ENCODE measurements at regions of chr10 and their contacts with region 1.

Region 1: GRCh38 chr10:109883859-109884771 is 39.2 kb downstream of the XPNPEP1 start:
- DNase-seq: peak; percentile 41 to 82 (median 52)
- ATAC-seq: peak; percentile 88
- H3K4me3 ChIP-seq: no peak overlapping the region
- H3K4me3 Mint-ChIP-seq: no peak overlapping the region
- H3K27ac ChIP-seq: no peak overlapping the region
- H3K27ac Mint-ChIP-seq: no peak overlapping the region
- H3K4me1 ChIP-seq: peaks cover 5% of the 10 kb centered on the region
- H3K4me1 Mint-ChIP-seq: peaks cover 6% of the 10 kb centered on the region
- H3K27me3 ChIP-seq: no peaks in the 10 kb centered on the region
- H3K27me3 Mint-ChIP-seq: no peaks in the 10 kb centered on the region
- CTCF ChIP-seq: peak; percentile 98

Region 2: GRCh38 chr10:109411917-109412316 is 472.2 kb before region 1 on chr10:
- CTCF ChIA-PET with region 1: no interaction called
- POLR2A ChIA-PET with region 1: no interaction called
- intact Hi-C with region 1: no loop called
- DNase-seq: no peak
- ATAC-seq: no peak
- H3K4me3 ChIP-seq: no peak overlapping the region
- H3K4me3 Mint-ChIP-seq: no peak overlapping the region
- H3K27ac ChIP-seq: no peak overlapping the region
- H3K27ac Mint-ChIP-seq: no peak overlapping the region
- H3K4me1 ChIP-seq: no peaks in the 10 kb centered on the region
- H3K4me1 Mint-ChIP-seq: no peaks in the 10 kb centered on the region
- H3K27me3 ChIP-seq: no peaks in the 10 kb centered on the region
- H3K27me3 Mint-ChIP-seq: no peaks in the 10 kb centered on the region
- CTCF ChIP-seq: no peak

Region 3: DNA sequence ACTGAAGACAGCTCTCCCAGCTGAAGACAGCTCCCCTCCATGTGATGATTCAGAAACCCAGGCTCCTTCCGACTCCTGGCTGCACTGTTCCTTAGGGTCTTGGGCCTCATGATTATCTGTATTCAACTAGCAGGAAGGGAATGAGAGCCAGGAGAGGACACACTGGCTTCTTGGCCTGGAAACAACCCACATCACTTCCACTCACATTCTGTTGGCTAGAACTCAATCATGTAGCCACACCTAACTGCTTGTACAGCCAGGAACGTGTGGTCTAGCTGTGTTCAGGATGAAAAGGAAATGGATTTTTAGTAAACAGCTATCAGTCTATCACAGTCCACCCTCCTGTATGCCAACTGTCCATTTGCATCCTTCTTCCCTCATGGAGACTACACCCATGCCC is 69.7 kb after region 1 on chr10:
- CTCF ChIA-PET with region 1: interaction called, 3 read pairs
- POLR2A ChIA-PET with region 1: no interaction called
- intact Hi-C with region 1: loop called in 1 of 2 experiments (anchors 2 kb)
- DNase-seq: no peak
- ATAC-seq: no peak
- H3K4me3 ChIP-seq: no peak overlapping the region
- H3K4me3 Mint-ChIP-seq: no peak overlapping the region
- H3K27ac ChIP-seq: no peak overlapping the region
- H3K27ac Mint-ChIP-seq: no peak overlapping the region
- H3K4me1 ChIP-seq: peaks cover 3% of the 10 kb centered on the region
- H3K4me1 Mint-ChIP-seq: peaks cover 6% of the 10 kb centered on the region
- H3K27me3 ChIP-seq: no peaks in the 10 kb centered on the region
- H3K27me3 Mint-ChIP-seq: no peaks in the 10 kb centered on the region
- CTCF ChIP-seq: no peak

Region 4: GRCh38 chr10:109987452-109988211 is 103.5 kb after region 1 on chr10:
- CTCF ChIA-PET with region 1: interaction called, 11 read pairs
- POLR2A ChIA-PET with region 1: no interaction called
- intact Hi-C with region 1: no loop called
- DNase-seq: no peak
- ATAC-seq: no peak
- H3K4me3 ChIP-seq: no peak overlapping the region
- H3K4me3 Mint-ChIP-seq: no peak overlapping the region
- H3K27ac ChIP-seq: no peak overlapping the region
- H3K27ac Mint-ChIP-seq: no peak overlapping the region
- H3K4me1 ChIP-seq: no peaks in the 10 kb centered on the region
- H3K4me1 Mint-ChIP-seq: no peaks in the 10 kb centered on the region
- H3K27me3 ChIP-seq: no peaks in the 10 kb centered on the region
- H3K27me3 Mint-ChIP-seq: no peaks in the 10 kb centered on the region
- CTCF ChIP-seq: no peak

Region 5: GRCh38 chr10:110118891-110119621 is 234.9 kb after region 1 on chr10:
- CTCF ChIA-PET with region 1: interaction called, 5 read pairs
- POLR2A ChIA-PET with region 1: no interaction called
- intact Hi-C with region 1: loop called in 1 of 2 experiments (anchors 5 kb)
- DNase-seq: no peak
- ATAC-seq: no peak
- H3K4me3 ChIP-seq: no peak overlapping the region
- H3K4me3 Mint-ChIP-seq: no peak overlapping the region
- H3K27ac ChIP-seq: no peak overlapping the region
- H3K27ac Mint-ChIP-seq: peak overlapping the region; percentile 50
- H3K4me1 ChIP-seq: no peaks in the 10 kb centered on the region
- H3K4me1 Mint-ChIP-seq: peaks cover 16% of the 10 kb centered on the region
- H3K27me3 ChIP-seq: no peaks in the 10 kb centered on the region
- H3K27me3 Mint-ChIP-seq: no peaks in the 10 kb centered on the region
- CTCF ChIP-seq: no peak

Region 6: GRCh38 chr10:110279407-110279986 is 395.4 kb after region 1 on chr10:
- CTCF ChIA-PET with region 1: no interaction called
- POLR2A ChIA-PET with region 1: no interaction called
- intact Hi-C with region 1: loop called (anchors 5 kb)
- DNase-seq: peak in 13 of 14 experiments; percentile 9 to 80 (median 28)
- ATAC-seq: peak; percentile 78
- H3K4me3 ChIP-seq: no peak overlapping the region
- H3K4me3 Mint-ChIP-seq: no peak overlapping the region
- H3K27ac ChIP-seq: no peak overlapping the region
- H3K27ac Mint-ChIP-seq: no peak overlapping the region
- H3K4me1 ChIP-seq: peaks cover 5% of the 10 kb centered on the region
- H3K4me1 Mint-ChIP-seq: peaks cover 44% of the 10 kb centered on the region
- H3K27me3 ChIP-seq: no peaks in the 10 kb centered on the region
- H3K27me3 Mint-ChIP-seq: no peaks in the 10 kb centered on the region
- CTCF ChIP-seq: peak; percentile 70

Region 7: DNA sequence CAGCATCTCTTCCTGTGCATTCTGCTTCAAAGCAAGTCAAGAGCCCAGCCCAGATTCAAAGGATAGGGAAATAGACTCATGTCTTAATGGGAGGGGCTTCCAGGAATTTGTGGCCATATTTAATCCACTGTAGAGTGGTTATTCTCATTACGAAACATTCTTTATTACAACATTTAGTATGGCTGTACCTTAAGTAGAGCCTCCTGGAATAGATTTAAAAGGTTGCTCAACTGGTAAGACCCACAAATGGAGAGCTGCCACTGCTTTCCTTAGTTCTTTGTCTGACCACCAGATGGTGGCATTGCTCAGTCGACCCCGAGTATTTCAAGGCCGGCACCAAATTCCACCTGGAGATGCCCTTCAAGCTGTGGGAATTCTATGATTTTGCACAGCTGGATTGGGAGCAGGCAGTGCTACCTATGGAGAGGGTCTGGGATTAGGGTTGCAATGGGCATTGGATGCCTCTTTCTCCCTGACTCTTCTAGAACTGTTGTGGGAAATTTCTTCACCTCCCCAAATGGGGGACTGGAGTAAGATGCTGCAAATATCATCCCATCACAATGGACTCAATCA is 862.2 kb after region 1 on chr10:
- CTCF ChIA-PET with region 1: no interaction called
- POLR2A ChIA-PET with region 1: no interaction called
- intact Hi-C with region 1: no loop called
- DNase-seq: peak in 13 of 14 experiments; percentile 12 to 77 (median 45)
- ATAC-seq: peak; percentile 19
- H3K4me3 ChIP-seq: no peak overlapping the region
- H3K4me3 Mint-ChIP-seq: no peak overlapping the region
- H3K27ac ChIP-seq: no peak overlapping the region
- H3K27ac Mint-ChIP-seq: peak overlapping the region; percentile 68
- H3K4me1 ChIP-seq: peaks cover 39% of the 10 kb centered on the region
- H3K4me1 Mint-ChIP-seq: peaks cover 89% of the 10 kb centered on the region
- H3K27me3 ChIP-seq: no peaks in the 10 kb centered on the region
- H3K27me3 Mint-ChIP-seq: no peaks in the 10 kb centered on the region
- CTCF ChIP-seq: peak; percentile 91